SK-N-SH (cell line): ENCODE measurements at regions of chr20 and their contacts with region 1.

Region 1: DNA sequence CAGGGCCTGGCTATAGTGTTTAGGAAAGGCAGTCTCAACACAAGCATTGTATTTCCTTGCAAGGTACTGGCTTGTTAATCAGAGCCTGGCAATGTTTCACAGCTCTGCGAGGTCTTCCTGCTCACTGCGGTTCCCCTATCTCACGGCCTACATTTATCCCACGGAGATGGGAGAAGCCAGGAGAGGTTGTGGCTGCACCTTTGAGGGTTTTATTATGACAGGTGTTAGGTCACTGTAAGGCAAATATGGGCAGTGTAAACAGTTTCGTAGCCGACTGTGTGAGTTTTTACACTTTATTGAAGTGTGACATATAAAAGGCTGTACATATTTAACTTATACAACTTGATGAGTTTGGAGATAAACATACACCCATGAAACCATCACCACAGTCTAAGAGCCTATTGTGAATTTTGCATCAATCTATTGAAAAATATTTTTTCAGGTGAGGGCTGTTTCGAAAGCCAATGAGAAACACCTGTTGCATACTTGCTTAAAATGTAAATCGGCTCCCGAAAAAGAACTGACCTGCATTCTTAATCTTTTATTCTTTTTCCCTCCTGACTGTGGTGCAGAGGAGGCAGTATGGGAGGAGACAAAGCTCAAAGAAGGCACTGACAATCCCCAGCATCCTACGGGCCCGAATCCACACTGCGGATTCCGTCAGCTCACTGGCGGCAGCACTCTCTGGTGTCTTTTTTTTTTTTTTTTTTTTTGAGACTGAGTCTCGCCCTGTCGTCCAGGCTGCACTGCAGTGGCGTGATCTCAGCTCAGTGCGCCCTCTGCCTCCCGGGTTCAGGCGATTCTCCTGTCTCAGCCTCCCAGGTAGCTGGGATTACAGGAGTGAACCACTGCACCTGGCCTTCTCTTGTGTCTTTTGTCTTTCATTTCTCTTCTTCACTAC is 7.5 kb upstream of the RBM38 start:
- DNase-seq: no peak
- H3K4me3 ChIP-seq: no peak overlapping the region
- H3K27ac ChIP-seq: no peak overlapping the region
- H3K4me1 ChIP-seq: no peaks in the 10 kb centered on the region
- H3K27me3 ChIP-seq: no peaks in the 10 kb centered on the region
- CTCF ChIP-seq: no peak
- EP300 ChIP-seq: no peak
- RAD21 ChIP-seq: no peak

Region 2: GRCh38 chr20:57231951-57232428 is 151.7 kb before region 1 on chr20:
- CTCF ChIA-PET with region 1: no interaction called
- POLR2A ChIA-PET with region 1: no interaction called
- DNase-seq: no peak
- H3K4me3 ChIP-seq: no peak overlapping the region
- H3K27ac ChIP-seq: no peak overlapping the region
- H3K4me1 ChIP-seq: no peaks in the 10 kb centered on the region
- H3K27me3 ChIP-seq: no peaks in the 10 kb centered on the region
- CTCF ChIP-seq: no peak
- EP300 ChIP-seq: no peak
- RAD21 ChIP-seq: no peak

Region 3: DNA sequence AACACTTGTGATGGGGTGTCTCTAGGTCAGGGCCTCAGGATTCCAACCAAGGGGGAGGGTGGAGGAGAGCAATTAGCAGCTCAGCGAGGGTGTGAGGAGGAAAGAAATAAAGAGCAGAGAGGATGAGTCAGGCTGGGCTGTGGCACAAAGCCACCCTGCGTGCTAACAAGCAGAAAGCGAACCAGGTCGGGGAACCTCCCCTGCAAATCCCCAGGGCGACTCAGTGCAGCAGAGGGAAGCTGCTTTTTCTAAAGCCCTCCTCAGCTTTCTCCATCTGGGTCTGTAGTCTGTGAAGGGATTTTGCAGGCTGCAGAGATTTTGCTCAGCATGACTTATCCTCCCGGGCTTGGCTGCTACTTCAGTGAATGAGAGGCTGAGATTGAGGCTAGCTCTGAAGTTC is 60.7 kb before region 1 on chr20:
- CTCF ChIA-PET with region 1: no interaction called
- POLR2A ChIA-PET with region 1: no interaction called
- DNase-seq: no peak
- H3K4me3 ChIP-seq: no peak overlapping the region
- H3K27ac ChIP-seq: no peak overlapping the region
- H3K4me1 ChIP-seq: peaks cover 0 to 6% of the 10 kb centered on the region in 2 experiments; a peak in 1 of 4 replicates
- H3K27me3 ChIP-seq: 0 out of 2 replicates have a peak, but pooled peaks cover 3% of the 10 kb centered on the region
- CTCF ChIP-seq: no peak
- EP300 ChIP-seq: no peak
- RAD21 ChIP-seq: no peak

Region 4: DNA sequence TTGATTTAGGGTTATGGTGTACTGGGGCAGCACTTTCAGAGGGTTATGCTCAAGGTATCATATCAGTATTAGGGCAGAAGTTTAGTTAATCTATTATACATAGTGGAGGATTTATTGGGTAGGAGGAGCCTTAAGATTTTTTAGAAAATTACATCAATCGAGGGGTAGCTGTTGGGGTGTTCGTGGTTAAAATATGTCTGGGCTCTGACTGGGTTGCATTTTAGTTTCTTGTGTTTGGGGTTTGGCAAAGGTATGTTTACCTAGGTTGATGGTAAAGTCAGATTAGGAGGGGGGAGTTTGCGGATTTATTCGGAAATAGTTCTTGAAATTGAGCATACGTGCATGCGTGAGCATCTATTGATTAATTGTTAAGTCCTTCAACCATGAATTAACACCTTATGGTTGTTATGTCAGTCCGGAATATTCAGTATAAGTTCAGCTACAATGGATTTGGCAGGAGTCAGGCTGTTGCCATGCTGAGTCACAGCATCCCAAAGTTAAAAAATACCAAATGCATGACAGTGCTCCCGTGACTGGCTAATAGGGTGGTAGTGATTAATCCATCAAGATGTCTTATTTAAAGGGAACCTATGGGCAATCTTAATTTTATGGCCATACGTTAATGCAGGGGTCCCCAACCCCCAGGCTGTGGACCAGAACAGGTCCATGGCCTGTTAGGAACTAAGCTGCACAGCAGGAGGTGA is 22.3 kb before region 1 on chr20:
- CTCF ChIA-PET with region 1: interaction called, 20 read pairs
- POLR2A ChIA-PET with region 1: no interaction called
- DNase-seq: no peak
- H3K4me3 ChIP-seq: no peak overlapping the region
- H3K27ac ChIP-seq: no peak overlapping the region
- H3K4me1 ChIP-seq: no peaks in the 10 kb centered on the region
- H3K27me3 ChIP-seq: no peaks in the 10 kb centered on the region
- CTCF ChIP-seq: no peak
- EP300 ChIP-seq: no peak
- RAD21 ChIP-seq: no peak

Region 5: DNA sequence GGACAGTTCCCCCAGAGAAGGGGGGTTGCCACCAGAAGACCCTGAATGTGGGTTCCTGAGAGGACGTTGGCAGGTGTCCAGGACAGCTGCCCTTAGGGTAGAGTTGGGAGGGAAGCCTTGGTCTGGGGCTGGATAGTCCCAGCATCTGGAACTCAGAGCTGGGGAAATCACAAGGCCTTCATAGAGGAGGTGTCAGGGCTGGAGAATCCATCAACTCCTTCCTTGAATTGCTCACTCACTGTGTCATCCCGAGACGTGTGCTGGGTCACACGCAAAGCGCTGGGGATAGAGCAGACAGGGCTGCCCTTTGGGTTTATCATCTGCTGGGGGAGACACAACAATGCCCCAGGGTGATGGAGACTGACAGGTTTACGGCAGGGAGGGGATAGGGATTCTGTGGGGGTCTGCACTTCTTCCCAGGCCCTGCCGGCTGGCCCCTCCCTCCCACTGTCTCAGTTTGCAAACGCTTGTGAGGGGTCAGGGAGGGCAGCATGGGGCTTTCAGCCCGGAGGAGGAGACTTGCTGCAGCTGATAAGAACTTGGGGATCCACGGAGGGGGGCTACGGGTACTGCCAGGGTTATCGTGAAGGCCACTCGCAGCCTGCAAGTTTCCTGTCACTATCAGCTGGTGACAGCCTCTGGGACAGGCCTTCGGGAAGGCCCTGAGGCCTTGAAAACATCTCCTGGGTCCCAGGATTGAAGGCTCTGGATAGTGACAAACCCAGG is 26.1 kb after region 1 on chr20:
- CTCF ChIA-PET with region 1: interaction called, 10 read pairs
- POLR2A ChIA-PET with region 1: interaction called, 3 read pairs
- DNase-seq: no peak
- H3K4me3 ChIP-seq: no peak overlapping the region
- H3K27ac ChIP-seq: peak overlapping the region in 1 of 2 experiments; percentile 50; a peak in 1 of 4 replicates
- H3K4me1 ChIP-seq: peaks cover 0 to 22% of the 10 kb centered on the region in 2 experiments; a peak in 1 of 4 replicates
- H3K27me3 ChIP-seq: no peaks in the 10 kb centered on the region
- CTCF ChIP-seq: no peak
- EP300 ChIP-seq: 0 out of 4 replicates have a peak, but pooled peaks of 1 of the 2 experiments have one; percentile 34
- RAD21 ChIP-seq: no peak

Region 6: GRCh38 chr20:57493091-57493615 is 109.5 kb after region 1 on chr20:
- CTCF ChIA-PET with region 1: interaction called, 68 read pairs
- POLR2A ChIA-PET with region 1: no interaction called
- DNase-seq: no peak
- H3K4me3 ChIP-seq: no peak overlapping the region
- H3K27ac ChIP-seq: no peak overlapping the region
- H3K4me1 ChIP-seq: peaks cover 0 to 6% of the 10 kb centered on the region in 2 experiments; a peak in 2 of 4 replicates
- H3K27me3 ChIP-seq: no peaks in the 10 kb centered on the region; the same call in 1 of the 2 replicates
- CTCF ChIP-seq: no peak
- EP300 ChIP-seq: no peak
- RAD21 ChIP-seq: no peak